ENCODE measurements at regions of chr2 and their contacts with region 1.

Region 1: DNA sequence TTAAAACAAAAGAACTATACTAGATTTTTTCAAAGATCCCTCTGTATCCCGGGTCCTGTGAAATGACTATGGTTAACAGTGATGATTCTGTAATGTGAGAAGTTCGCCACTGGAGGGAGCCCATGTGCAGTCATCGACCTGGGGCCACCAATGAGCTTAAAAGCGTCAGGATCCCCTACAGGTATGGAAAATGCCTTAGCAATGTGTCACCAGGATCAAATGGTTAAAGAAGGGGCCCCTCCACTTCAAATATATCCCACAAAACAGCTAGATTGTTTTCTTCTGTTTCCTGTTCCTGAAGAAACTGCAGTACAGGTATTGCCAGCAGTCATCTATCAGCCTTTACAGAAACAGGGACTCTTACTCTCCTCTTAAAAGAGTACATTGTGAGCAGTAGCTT is 15.3 kb downstream of the CHRNA1 start:
- DNase-seq: peak; percentile 54 to 57
- ATAC-seq: peak; percentile 88 to 95
- H3K4me3 ChIP-seq: no peak overlapping the region
- H3K27ac ChIP-seq: no peak overlapping the region
- H3K4me1 ChIP-seq: no peaks in the 10 kb centered on the region
- CTCF ChIP-seq: peak; percentile 86
- EP300 ChIP-seq: no peak
- POLR2A ChIP-seq: no peak
- RAD21 ChIP-seq: peak; percentile 76

Region 2: DNA sequence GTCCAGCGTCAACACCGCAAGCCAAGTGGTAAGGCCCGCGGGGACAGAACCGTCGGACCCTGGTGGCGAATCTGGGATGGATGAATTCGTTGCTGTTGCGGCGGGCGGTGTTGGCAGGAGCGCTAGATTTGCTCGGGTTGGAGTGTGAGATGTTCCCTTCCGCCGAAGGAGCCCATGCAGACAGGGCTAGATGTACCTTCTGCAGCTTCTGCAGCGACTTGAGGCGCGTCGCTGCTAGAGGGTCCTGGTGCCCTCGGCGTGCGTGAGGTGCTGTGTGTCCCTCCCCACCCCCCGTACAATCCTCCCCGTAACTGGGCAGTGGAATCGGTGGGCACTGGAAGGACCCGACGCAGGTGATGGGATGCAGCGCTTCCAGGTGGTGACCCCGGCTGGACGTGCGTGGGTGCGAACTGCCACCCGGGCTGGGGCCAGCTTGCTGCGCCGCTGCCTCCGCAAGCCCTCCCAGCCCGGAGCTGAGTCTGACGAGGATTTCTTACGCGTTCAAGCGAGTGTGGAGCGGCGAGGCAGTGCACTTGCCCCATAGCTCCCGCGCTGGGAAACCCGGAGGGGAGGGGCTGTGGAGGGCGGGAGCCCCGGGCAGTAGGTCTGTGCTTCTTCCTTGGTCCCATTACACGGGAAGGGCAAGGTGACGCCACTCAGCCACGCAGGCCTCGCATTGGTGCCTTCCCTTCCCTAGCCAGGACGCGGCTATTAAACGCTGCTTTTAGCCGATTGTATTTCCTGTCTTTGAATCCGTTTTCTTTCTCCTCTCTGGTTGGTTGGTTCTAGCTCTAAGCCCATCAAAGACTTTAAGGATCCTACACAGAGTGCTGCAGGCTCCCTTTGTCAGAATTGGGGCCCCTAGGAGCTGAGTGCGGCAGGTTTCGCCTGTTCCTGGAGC is 18.9 kb before region 1 on chr2:
- CTCF ChIA-PET with region 1: interaction called, 12 read pairs
- POLR2A ChIA-PET with region 1: no interaction called
- DNase-seq: peak; percentile 11 to 43
- ATAC-seq: peak; percentile 58 to 84
- H3K4me3 ChIP-seq: peak overlapping the region; percentile 51
- H3K27ac ChIP-seq: peak overlapping the region in 1 of 2 experiments; percentile 61; a peak in 3 of 6 replicates
- H3K4me1 ChIP-seq: no peaks in the 10 kb centered on the region
- CTCF ChIP-seq: no peak
- EP300 ChIP-seq: no peak
- POLR2A ChIP-seq: no peak
- RAD21 ChIP-seq: no peak

Region 3: GRCh38 chr2:174764280-174765255 is 15.6 kb after region 1 on chr2 and contains the start of gene CHRNA1:
- CTCF ChIA-PET with region 1: interaction called, 68 read pairs
- POLR2A ChIA-PET with region 1: no interaction called
- DNase-seq: no peak
- ATAC-seq: peak in 1 of 2 experiments; percentile 45; a peak in 3 of 6 replicates
- H3K4me3 ChIP-seq: no peak within 1 kb of the TSS
- H3K27ac ChIP-seq: peak within 1 kb of the TSS in 1 of 2 experiments; percentile 2; a peak in 1 of 6 replicates
- H3K4me1 ChIP-seq: peaks cover 10% of the 10 kb centered on the region; the same call in 1 of the 3 replicates
- CTCF ChIP-seq: no peak
- EP300 ChIP-seq: no peak
- POLR2A ChIP-seq: no peak
- RAD21 ChIP-seq: no peak
- polyA plus RNA-seq, gene CHRNA1: not detected in 2 replicates

Region 4: DNA sequence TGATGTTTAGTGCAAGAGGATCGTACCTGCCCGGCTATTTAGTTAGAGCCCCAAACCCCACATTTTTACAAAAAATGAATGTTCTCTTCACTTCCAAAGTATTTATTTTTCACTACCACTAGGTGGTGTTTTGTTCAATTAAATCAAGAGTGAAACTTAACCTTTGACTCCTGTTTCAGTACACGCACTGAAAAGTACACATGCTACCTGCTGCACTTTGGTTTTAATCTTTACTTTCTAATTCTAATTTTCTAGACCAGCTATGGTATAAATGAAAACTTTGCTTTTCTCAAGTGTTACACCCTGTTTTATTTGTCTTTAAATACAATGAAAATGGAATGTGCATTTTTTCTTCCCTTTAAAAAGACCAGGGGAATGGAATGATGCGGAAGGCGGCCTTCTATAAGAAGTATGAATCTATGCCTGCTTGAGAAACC is 287.7 kb after region 1 on chr2:
- CTCF ChIA-PET with region 1: no interaction called
- POLR2A ChIA-PET with region 1: no interaction called
- DNase-seq: peak; percentile 41 to 44
- ATAC-seq: peak in 1 of 2 experiments; percentile 68; a peak in 3 of 6 replicates
- H3K4me3 ChIP-seq: no peak overlapping the region
- H3K27ac ChIP-seq: no peak overlapping the region
- H3K4me1 ChIP-seq: peaks cover 3% of the 10 kb centered on the region; the same call in 1 of the 3 replicates
- CTCF ChIP-seq: peak; percentile 71
- EP300 ChIP-seq: no peak
- POLR2A ChIP-seq: no peak
- RAD21 ChIP-seq: peak; percentile 39 to 59